ENCODE measurements at regions of chr7 and their contacts with region 1.

Region 1: GRCh38 chr7:107394831-107395230 is 75.0 kb upstream of the GPR22 start:
- DNase-seq: no peak
- ATAC-seq: no peak
- H3K4me3 ChIP-seq: no peak overlapping the region
- H3K4me3 Mint-ChIP-seq: no peak overlapping the region
- H3K27ac ChIP-seq: no peak overlapping the region
- H3K27ac Mint-ChIP-seq: no peak overlapping the region
- H3K4me1 ChIP-seq: no peaks in the 10 kb centered on the region
- H3K4me1 Mint-ChIP-seq: no peaks in the 10 kb centered on the region
- H3K27me3 ChIP-seq: no peaks in the 10 kb centered on the region
- H3K27me3 Mint-ChIP-seq: no peaks in the 10 kb centered on the region

Region 2: DNA sequence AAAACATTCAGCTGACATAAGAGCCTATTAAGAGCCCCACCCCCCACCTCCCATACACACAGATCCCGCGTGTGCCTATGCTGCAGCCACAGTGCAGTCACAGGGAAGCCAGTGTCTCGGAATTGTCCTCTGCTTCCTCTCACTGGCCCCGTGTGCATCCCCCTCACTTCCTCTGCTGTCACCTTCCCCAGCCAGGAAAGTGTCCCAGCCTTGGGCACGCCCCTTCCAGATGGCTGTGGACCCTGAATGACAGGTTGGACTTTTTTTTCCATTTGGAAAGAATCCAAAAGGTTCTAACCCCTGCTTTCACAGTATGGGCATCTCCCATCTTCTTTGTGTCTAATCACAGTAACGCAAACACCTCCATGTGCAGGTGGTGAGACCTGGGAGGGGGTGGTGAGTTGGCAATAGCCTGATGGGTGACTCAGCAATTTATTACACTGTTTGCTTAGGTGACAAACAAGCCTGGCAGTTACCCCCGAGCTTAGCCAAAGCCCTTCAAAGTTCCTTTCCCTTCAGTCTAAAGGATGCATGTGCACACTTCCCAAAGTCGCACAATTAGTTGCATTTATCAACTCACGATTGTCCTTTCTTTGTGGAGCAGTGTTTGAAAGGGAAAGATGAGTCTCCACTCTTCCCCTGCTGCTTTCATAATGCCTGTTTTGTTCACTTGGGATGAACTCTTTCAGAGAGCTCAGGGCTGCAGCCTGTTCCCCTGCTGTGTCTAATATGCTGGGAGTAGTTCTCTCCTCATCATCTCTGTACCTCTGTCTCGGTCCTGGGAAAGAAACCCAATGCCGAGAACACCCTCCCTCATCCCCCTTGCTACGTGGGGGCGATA is 1746.0 kb before region 1 on chr7:
- CTCF ChIA-PET with region 1: interaction called in 1 of 2 experiments, 18 read pairs
- POLR2A ChIA-PET with region 1: no interaction called
- DNase-seq: no peak
- ATAC-seq: no peak
- H3K4me3 ChIP-seq: no peak overlapping the region
- H3K4me3 Mint-ChIP-seq: no peak overlapping the region
- H3K27ac ChIP-seq: no peak overlapping the region
- H3K27ac Mint-ChIP-seq: peak overlapping the region in 1 of 2 donors; percentile 41
- H3K4me1 ChIP-seq: no peaks in the 10 kb centered on the region
- H3K4me1 Mint-ChIP-seq: peaks cover 11 to 14% (median 11%) of the 10 kb centered on the region in 3 donors
- H3K27me3 ChIP-seq: no peaks in the 10 kb centered on the region
- H3K27me3 Mint-ChIP-seq: no peaks in the 10 kb centered on the region

Region 3: GRCh38 chr7:107332488-107333269 is 62.2 kb before region 1 on chr7:
- CTCF ChIA-PET with region 1: no interaction called
- POLR2A ChIA-PET with region 1: no interaction called
- DNase-seq: peak in 1 of 35 experiments; percentile 7
- ATAC-seq: peak in 3 of 4 experiments; percentile 49 to 57 (median 50)
- H3K4me3 ChIP-seq: no peak overlapping the region
- H3K4me3 Mint-ChIP-seq: peak overlapping the region in 2 of 3 donors; percentile 0 to 18
- H3K27ac ChIP-seq: no peak overlapping the region
- H3K27ac Mint-ChIP-seq: no peak overlapping the region
- H3K4me1 ChIP-seq: peaks cover 0 to 5% of the 10 kb centered on the region in 2 experiments
- H3K4me1 Mint-ChIP-seq: peaks cover 19 to 28% (median 27%) of the 10 kb centered on the region in 3 donors
- H3K27me3 ChIP-seq: no peaks in the 10 kb centered on the region
- H3K27me3 Mint-ChIP-seq: no peaks in the 10 kb centered on the region

Measured in T-cell (primary cell).